ENCODE measurements at regions of chr14 and their contacts with region 1.

Region 1: DNA sequence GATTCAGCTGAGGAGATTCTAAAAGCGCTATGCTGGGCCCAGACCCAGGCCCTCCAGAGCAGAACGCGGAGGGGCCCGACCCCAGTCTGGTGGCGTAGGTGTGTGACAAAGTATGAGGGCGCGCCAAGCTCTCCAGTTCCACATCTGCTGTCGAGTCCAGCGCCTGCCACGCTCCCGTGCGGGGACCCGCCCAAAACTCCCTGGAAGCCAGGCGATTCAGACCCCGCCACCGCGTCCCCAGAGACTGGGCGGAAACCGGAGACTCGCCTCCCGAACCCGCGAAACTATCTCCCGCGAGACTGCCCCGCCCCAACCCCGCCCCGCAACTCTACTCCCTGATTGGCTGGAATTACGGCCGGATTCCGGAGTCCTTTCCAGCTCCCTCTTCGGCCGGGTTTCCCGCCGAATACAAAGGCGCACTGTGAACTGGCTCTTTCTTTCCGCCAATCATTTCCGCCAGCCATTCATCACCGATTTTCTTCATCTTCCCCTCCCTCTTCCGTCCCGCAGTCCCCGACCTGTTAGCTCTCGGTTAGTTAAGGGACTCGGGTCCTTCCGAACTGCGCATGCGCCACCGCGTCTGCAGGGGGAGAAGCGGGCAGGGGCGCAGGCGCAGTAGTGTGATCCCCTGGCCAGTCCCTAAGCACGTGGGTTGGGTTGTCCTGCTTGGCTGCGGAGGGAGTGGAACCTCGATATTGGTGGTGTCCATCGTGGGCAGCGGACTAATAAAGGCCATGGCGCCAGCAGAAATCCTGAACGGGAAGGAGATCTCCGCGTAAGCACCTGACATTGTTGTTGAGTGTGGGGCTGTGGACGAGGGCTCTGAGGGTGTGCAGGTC is at the start of gene MTHFD1:
- DNase-seq: peak; percentile 98
- H3K4me3 Mint-ChIP-seq: peak within 1 kb of the TSS; percentile 99
- H3K27ac Mint-ChIP-seq: peak within 1 kb of the TSS; percentile 95
- H3K4me1 Mint-ChIP-seq: peaks cover 33% of the 10 kb centered on the region
- H3K27me3 Mint-ChIP-seq: peaks cover 3% of the 10 kb centered on the region
- total RNA-seq, gene MTHFD1: 212 to 221 TPM

Region 2: GRCh38 chr14:64338616-64339316 is 49.1 kb before region 1 on chr14:
- CTCF ChIA-PET with region 1: interaction called, 5 read pairs
- POLR2A ChIA-PET with region 1: interaction called, 29 read pairs
- intact Hi-C with region 1: loop called (anchors 1 kb)
- DNase-seq: peak; percentile 93
- H3K4me3 Mint-ChIP-seq: peak overlapping the region; percentile 91
- H3K27ac Mint-ChIP-seq: peak overlapping the region; percentile 95
- H3K4me1 Mint-ChIP-seq: peaks cover 23% of the 10 kb centered on the region
- H3K27me3 Mint-ChIP-seq: no peaks in the 10 kb centered on the region

Region 3: GRCh38 chr14:64465191-64465822 is 77.4 kb after region 1 on chr14 and contains the start of gene AKAP5:
- CTCF ChIA-PET with region 1: interaction called, 3 read pairs
- POLR2A ChIA-PET with region 1: interaction called, 3 read pairs
- intact Hi-C with region 1: loop called (anchors 10 kb)
- DNase-seq: peak; percentile 69
- H3K4me3 Mint-ChIP-seq: peak within 1 kb of the TSS; percentile 75
- H3K27ac Mint-ChIP-seq: peak within 1 kb of the TSS; percentile 3
- H3K4me1 Mint-ChIP-seq: peaks cover 37% of the 10 kb centered on the region
- H3K27me3 Mint-ChIP-seq: no peaks in the 10 kb centered on the region
- total RNA-seq, gene AKAP5: 0.74 to 1.1 TPM

Region 4: DNA sequence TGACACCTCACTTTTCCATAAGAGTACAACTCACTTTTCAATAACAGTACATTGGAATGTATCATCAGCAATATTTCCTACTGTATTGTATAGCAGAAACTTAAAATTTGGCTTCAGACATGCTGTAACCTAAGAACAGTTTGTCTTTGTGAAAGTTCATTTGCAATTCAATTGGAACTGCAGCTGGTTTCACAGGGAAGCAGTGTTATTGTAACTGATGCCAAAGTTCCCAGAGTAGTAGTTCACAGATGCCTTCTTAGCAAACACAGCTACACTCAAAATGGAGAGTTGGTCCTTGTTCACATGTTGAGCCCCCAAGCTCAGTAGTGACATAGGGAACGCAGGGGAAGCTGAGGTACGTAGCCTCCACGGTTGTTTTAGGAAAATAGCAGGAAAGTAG is 185.2 kb after region 1 on chr14:
- CTCF ChIA-PET with region 1: no interaction called
- POLR2A ChIA-PET with region 1: no interaction called
- intact Hi-C with region 1: no loop called
- DNase-seq: no peak
- H3K4me3 Mint-ChIP-seq: no peak overlapping the region
- H3K27ac Mint-ChIP-seq: no peak overlapping the region
- H3K4me1 Mint-ChIP-seq: no peaks in the 10 kb centered on the region
- H3K27me3 Mint-ChIP-seq: no peaks in the 10 kb centered on the region